PC-9 (cell line): ENCODE measurements at regions of chr3 and their contacts with region 1.

Region 1: DNA sequence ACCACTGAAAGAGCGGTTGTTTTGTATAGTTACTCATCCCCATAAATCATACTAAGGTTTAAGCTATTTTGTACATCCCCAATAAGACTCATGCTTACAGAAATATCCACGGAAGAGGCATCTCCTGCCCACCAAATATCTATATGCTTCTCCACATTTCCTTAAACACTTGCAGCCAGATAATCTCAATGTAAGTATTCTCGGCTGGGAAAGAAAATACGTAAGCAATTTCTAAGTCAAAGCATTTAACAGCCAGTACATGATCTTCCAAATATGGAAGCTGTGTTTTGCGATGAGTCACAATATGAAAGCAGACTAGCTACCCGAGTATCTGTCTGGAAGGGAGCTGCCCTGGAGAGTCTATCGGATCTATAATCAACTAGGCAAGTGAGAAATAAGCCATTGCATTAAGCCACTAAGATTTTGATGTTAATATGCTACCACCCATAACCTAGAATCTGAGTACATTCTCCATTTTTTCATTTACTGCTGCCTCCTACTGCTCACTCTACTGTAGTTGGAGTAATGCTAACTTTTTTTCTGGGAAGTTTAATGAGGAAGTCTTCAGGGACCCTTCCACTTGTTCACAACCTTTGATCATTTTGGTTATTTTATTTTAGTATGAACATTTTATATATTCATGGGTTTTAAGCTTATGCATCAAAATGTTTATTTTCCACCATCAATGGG is 26.9 kb upstream of the ZMAT3 start:
- DNase-seq: no peak
- H3K4me3 ChIP-seq: no peak overlapping the region
- H3K27ac ChIP-seq: no peak overlapping the region
- H3K4me1 ChIP-seq: no peaks in the 10 kb centered on the region
- H3K27me3 ChIP-seq: no peaks in the 10 kb centered on the region
- CTCF ChIP-seq: no peak

Region 2: GRCh38 chr3:179276001-179276400 is 177.5 kb after region 1 on chr3:
- CTCF ChIA-PET with region 1: interaction called, 12 read pairs
- POLR2A ChIA-PET with region 1: no interaction called
- intact Hi-C with region 1: no loop called
- DNase-seq: no peak
- H3K4me3 ChIP-seq: no peak overlapping the region
- H3K27ac ChIP-seq: no peak overlapping the region
- H3K4me1 ChIP-seq: no peaks in the 10 kb centered on the region
- H3K27me3 ChIP-seq: no peaks in the 10 kb centered on the region
- CTCF ChIP-seq: no peak